ENCODE measurements at regions of chr14 and their contacts with region 1.

Region 1: GRCh38 chr14:50106178-50106577 is 10.2 kb downstream of the VCPKMT start:
- DNase-seq: no peak
- H3K4me3 Mint-ChIP-seq: no peak overlapping the region
- H3K27ac Mint-ChIP-seq: no peak overlapping the region
- H3K4me1 Mint-ChIP-seq: peaks cover 31% of the 10 kb centered on the region
- H3K27me3 Mint-ChIP-seq: no peaks in the 10 kb centered on the region

Region 2: DNA sequence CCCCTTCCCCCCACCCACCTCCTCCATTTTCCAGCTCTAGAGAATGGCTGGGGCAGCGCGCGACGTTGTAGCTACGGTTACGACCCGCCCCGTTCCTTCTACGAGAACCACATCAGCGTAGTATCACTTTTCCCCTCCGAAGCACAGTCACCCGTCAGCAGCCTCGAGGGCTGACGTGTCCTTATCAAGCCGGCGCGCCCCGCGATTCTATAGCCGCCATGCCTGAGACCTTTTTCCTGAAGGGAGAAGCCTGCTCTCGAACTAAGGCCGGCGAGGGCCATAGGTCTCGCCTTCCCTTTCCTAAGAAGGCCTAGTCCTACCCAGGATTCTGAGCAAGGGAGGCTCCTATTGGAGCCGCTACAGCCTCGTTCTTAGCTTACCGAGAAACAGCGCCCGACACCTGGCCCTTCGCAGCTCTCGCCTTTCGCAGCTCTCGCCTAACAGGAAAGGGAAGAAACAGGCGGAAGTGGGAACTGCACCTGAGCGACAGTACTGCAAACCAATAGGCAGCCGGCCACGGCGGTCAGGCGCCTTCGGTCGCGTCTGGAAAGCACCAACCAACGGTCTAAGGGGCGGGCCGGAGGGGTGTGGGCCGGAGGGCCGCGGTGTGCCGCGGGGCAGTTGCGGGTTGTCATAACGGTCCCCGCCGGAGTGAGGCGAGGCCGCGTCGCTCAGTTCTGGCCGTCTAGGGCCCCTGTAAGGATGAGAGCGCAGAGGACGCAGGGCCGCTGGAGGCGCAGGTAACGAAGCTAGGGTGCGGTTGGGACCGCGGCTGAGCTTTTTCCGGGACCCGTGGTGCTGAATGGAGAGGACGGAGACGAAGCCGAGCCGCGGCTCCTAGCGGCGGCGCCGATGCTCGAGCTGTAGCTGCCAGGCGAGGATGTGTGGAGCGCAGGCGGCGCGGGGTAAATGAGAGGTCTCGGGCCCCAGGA is 485.7 kb before region 1 on chr14 and contains the starts of genes MGAT2 and RPL36AL:
- CTCF ChIA-PET with region 1: no interaction called
- POLR2A ChIA-PET with region 1: no interaction called
- DNase-seq: peak; percentile 96
- H3K4me3 Mint-ChIP-seq: peak within 1 kb of the TSS; percentile 94
- H3K27ac Mint-ChIP-seq: peak within 1 kb of the TSS; percentile 94
- H3K4me1 Mint-ChIP-seq: peaks cover 50% of the 10 kb centered on the region
- H3K27me3 Mint-ChIP-seq: no peaks in the 10 kb centered on the region
- total RNA-seq, gene MGAT2: 82.7 to 86.5 TPM
- total RNA-seq, gene RPL36AL: 320 to 330 TPM

Region 3: DNA sequence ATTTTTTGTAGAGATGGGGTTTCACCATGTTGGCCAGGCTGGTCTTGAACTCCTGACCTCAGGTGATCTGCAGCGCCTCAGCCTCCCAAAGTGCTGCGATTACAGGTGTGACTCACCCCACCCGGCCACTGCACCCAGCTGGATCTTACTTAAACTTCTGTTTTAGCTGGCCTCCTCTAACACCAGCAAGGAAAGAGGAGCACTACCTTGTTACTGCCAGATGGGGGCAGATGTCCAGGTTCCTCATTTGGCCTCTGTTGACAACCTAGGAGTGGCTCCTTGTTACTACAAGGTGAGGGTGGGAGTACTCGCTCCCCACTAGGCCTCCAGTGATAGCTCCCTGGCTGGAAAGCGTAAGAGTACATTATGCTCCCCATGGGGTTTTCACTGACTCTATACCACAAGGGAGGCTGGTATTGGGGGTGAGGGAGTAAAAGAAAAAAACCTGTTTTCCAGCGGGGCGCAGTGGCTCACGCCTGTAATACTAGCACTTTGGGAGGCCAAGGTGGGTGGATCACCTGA is 226.4 kb before region 1 on chr14:
- CTCF ChIA-PET with region 1: interaction called, 10 read pairs
- POLR2A ChIA-PET with region 1: interaction called, 5 read pairs
- DNase-seq: peak; percentile 76
- H3K4me3 Mint-ChIP-seq: no peak overlapping the region
- H3K27ac Mint-ChIP-seq: peak overlapping the region; percentile 50
- H3K4me1 Mint-ChIP-seq: peaks cover 48% of the 10 kb centered on the region
- H3K27me3 Mint-ChIP-seq: no peaks in the 10 kb centered on the region

Region 4: DNA sequence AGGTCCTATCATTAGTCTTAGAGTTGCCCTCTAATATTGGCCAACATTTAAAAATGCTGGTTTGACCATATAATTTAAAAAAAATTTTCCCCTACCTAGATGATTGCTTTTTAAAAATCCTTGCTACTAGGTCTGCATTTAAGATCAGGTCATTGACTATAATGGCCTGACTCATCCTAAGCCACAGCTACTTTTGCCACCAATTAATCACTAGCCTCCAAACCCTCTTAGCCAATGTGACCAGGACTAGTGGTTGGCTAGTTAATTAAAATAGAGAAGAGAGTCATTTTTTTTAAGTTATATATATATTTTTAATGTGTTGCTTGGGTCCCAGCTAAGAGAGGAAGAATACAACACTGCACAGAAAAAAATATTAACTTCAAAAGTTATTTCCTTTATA is 67.7 kb after region 1 on chr14:
- CTCF ChIA-PET with region 1: no interaction called
- POLR2A ChIA-PET with region 1: no interaction called
- DNase-seq: no peak
- H3K4me3 Mint-ChIP-seq: no peak overlapping the region
- H3K27ac Mint-ChIP-seq: no peak overlapping the region
- H3K4me1 Mint-ChIP-seq: no peaks in the 10 kb centered on the region
- H3K27me3 Mint-ChIP-seq: no peaks in the 10 kb centered on the region

Region 5: DNA sequence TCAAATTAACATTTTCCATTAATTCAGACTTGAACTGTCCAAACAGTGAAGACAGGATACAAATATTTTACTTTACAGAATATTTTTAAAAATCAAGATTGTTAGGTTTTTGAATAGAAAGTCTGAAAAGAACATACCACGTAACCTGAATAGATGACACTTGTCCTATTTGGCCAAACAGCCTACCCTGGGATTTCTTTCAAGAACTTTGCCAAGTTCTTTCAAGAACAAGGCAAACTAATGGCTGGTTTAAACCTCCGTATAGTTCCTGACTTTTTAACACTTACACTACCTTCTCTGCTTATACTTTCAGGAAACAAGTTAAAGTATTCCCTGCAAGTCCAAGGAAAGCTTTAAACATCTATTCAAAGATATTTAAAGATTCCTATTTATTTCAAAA is 391.2 kb after region 1 on chr14:
- CTCF ChIA-PET with region 1: no interaction called
- POLR2A ChIA-PET with region 1: no interaction called
- DNase-seq: no peak
- H3K4me3 Mint-ChIP-seq: no peak overlapping the region
- H3K27ac Mint-ChIP-seq: no peak overlapping the region
- H3K4me1 Mint-ChIP-seq: no peaks in the 10 kb centered on the region
- H3K27me3 Mint-ChIP-seq: no peaks in the 10 kb centered on the region